HEK293T (cell line): ENCODE measurements at regions of chr16 and their contacts with region 1.

Region 1: DNA sequence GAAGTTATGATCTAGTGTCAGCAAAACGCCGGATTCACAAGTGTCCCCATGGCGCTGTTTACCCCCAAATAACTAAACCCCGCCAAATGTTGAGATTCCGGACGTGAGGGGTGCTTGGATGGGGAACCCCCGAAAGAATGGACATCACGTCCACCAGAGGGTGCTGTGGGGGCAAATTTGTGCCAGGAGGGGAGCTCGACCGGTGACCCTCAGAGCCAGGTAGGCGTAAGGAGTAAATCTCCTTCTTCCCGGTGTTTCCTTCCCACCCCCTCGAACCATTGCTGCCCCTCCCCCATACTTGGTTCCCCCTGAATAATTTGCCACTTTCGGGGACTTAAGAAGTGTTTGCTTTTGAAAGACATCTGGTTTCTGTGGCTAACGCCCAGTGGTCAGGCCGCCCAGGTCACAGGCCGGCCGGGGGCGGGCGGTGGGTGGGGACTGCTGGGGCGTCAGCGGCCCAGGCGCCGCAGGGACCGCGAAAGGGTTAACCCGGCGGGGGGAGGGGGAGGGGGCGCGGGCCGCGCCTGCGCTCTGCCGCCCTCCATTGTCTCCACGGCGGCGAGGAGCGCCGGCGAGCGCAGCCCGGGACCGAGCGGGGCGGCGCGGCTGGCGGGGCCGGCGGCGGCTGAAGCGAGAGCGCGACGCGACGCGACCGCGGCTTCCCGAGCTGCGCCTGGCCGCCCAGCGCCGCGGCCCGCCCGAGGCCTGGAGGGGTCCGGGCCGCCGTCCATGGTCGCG is at the start of gene ZNRF1:
- DNase-seq: peak; percentile 89

Region 2: DNA sequence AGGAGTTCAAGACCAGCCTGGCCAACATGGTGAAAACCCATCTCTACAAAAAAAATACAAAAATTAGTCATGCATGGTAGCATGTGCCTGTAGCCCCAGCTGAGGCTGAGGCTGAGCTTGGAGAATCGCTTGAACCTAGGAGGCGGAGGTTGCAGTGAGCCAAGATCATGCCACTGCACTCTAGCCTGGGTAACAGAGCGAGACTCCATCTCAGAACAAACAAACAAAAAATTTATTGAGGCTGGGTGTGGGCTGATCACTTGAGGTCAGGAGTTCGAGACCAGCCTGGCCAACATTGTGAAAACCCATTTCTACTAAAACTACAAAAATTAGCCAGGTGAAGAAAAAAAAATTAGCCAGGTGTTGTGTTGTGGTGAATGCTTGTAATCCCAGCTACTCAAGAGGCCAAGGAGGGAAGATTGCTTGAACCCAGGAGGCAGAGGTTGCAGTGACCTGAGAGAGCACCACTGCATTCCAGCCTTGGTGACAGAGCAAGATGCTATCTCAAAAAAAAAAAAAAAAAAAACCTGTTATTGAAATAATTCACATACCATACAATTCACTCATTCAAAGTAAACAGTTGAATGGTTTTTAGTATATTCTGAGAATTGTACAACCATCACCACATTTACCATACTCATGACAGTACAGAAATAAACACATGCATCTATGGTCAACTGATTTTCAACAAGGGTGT is 31.1 kb after region 1 on chr16:
- CTCF ChIA-PET with region 1: no interaction called
- POLR2A ChIA-PET with region 1: no interaction called
- DNase-seq: no peak

Region 3: GRCh38 chr16:75053791-75054555 is 55.3 kb after region 1 on chr16:
- CTCF ChIA-PET with region 1: interaction called, 10 read pairs
- POLR2A ChIA-PET with region 1: no interaction called
- DNase-seq: no peak

Region 4: GRCh38 chr16:75110637-75111513 is 112.2 kb after region 1 on chr16:
- CTCF ChIA-PET with region 1: interaction called, 37 read pairs
- POLR2A ChIA-PET with region 1: interaction called, 4 read pairs
- DNase-seq: peak; percentile 87